GM12878 (cell line): ENCODE measurements at regions of chr9 and their contacts with region 1.

Region 1: DNA sequence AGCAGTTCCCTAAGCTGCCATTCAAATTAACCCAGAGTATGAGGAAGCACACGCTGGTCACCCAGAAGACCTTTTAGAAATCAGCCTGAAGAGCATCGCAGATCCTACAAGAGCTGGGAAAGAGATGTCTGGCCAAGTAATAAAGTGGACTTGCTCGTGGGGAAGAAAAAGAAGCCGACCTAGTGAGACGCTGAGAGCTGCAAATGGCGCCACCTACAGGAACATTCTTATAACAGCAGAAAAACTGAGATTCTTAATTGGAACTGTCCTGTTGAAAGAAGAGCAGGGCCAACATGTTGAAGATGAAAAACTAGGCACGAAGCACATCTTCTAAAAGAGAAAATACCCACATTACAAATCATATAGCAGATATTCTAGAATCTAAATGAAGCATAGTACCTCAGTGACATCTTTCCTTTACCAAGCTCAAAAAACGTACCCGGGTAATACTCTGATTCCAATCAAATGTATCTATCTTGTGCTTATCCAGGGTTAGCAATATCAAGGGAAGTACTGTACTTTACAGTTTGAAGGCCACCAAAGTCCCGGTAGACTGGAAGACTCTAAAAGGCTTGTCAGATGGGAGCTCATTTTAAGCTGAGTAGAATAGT is 3.9 kb upstream of the GNAQ start:
- DNase-seq: peak; percentile 7
- ATAC-seq: peak; percentile 51
- H3K4me3 ChIP-seq: no peak overlapping the region
- H3K27ac ChIP-seq: no peak overlapping the region
- H3K4me1 ChIP-seq: no peaks in the 10 kb centered on the region
- H3K27me3 ChIP-seq: peaks cover 4 to 15% of the 10 kb centered on the region in 2 experiments; a peak in 3 of 4 replicates
- CTCF ChIP-seq: peak; percentile 64 to 72 (median 71)
- EP300 ChIP-seq: no peak
- POLR2A ChIP-seq: no peak
- RAD21 ChIP-seq: peak; percentile 84

Region 2: GRCh38 chr9:77841739-77842386 is 193.6 kb before region 1 on chr9:
- CTCF ChIA-PET with region 1: interaction called, 36 read pairs
- POLR2A ChIA-PET with region 1: no interaction called
- RAD21 ChIA-PET with region 1: interaction called, 21 read pairs
- SMC1A ChIA-PET with region 1: interaction called, 30 read pairs
- in situ Hi-C with region 1: no loop called
- intact Hi-C with region 1: no loop called
- DNase-seq: peak; percentile 16
- ATAC-seq: peak; percentile 95
- H3K4me3 ChIP-seq: no peak overlapping the region
- H3K27ac ChIP-seq: no peak overlapping the region
- H3K4me1 ChIP-seq: peaks cover 8% of the 10 kb centered on the region; the same call in 1 of the 2 replicates
- H3K27me3 ChIP-seq: no peaks in the 10 kb centered on the region
- CTCF ChIP-seq: peak; percentile 1 to 16 (median 8); a peak in 2 of 6 replicates
- EP300 ChIP-seq: no peak; a peak in 1 of 4 replicates
- POLR2A ChIP-seq: no peak
- RAD21 ChIP-seq: peak; percentile 48

Region 3: DNA sequence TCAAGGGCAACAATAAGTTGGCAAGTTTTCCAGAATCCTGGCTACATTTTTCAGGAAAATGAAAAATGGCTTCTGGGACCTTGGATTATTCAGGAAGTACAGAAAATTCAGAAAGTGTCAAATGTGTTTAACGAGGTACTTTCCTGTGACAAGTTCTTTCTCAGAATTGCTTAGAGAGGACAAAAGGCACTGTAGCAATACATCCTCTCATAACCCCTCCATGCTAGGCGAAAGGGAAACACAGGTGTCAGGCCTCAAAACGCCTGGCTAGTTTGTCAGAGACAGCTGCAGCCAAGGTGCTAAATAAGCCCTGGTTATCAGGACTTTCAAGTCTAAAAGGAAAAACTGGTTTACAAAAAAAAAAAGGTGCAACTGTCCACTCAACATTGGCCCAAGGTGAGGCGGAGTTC is 119.1 kb before region 1 on chr9:
- CTCF ChIA-PET with region 1: interaction called, 15 read pairs
- POLR2A ChIA-PET with region 1: no interaction called
- RAD21 ChIA-PET with region 1: interaction called, 3 read pairs
- SMC1A ChIA-PET with region 1: interaction called, 5 read pairs
- in situ Hi-C with region 1: no loop called
- intact Hi-C with region 1: no loop called
- DNase-seq: peak; percentile 24
- ATAC-seq: peak; percentile 89
- H3K4me3 ChIP-seq: no peak overlapping the region
- H3K27ac ChIP-seq: no peak overlapping the region; the same call in 1 of the 2 replicates
- H3K4me1 ChIP-seq: peaks cover 7% of the 10 kb centered on the region
- H3K27me3 ChIP-seq: no peaks in the 10 kb centered on the region
- CTCF ChIP-seq: no peak
- EP300 ChIP-seq: peak; percentile 72 to 86; a peak in 3 of 4 replicates
- POLR2A ChIP-seq: no peak
- RAD21 ChIP-seq: no peak

Region 4: DNA sequence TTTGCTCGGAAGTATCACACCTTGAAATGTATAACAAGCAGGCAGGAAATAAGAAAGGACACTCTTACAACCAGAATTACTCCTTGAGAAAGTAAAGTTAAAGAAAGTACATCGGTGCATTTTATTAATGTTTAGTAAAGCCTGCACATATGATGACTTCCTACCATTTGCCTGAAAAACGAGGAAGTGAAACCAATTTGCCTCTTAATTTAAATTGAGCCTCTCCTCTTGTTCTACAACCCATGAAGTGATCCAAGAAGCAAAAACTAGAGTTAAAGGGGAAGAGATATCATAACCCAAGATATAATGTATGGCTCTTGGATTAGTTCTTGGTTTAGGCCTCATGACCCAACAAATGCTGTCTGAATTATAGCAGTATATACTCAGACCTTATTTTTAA is 99.5 kb before region 1 on chr9:
- CTCF ChIA-PET with region 1: no interaction called
- POLR2A ChIA-PET with region 1: no interaction called
- RAD21 ChIA-PET with region 1: no interaction called
- SMC1A ChIA-PET with region 1: no interaction called
- in situ Hi-C with region 1: no loop called
- intact Hi-C with region 1: no loop called
- DNase-seq: no peak
- ATAC-seq: peak; percentile 77
- H3K4me3 ChIP-seq: no peak overlapping the region
- H3K27ac ChIP-seq: no peak overlapping the region
- H3K4me1 ChIP-seq: no peaks in the 10 kb centered on the region
- H3K27me3 ChIP-seq: no peaks in the 10 kb centered on the region; a peak in 1 of 4 replicates
- CTCF ChIP-seq: no peak
- EP300 ChIP-seq: no peak
- POLR2A ChIP-seq: no peak
- RAD21 ChIP-seq: no peak

Region 5: DNA sequence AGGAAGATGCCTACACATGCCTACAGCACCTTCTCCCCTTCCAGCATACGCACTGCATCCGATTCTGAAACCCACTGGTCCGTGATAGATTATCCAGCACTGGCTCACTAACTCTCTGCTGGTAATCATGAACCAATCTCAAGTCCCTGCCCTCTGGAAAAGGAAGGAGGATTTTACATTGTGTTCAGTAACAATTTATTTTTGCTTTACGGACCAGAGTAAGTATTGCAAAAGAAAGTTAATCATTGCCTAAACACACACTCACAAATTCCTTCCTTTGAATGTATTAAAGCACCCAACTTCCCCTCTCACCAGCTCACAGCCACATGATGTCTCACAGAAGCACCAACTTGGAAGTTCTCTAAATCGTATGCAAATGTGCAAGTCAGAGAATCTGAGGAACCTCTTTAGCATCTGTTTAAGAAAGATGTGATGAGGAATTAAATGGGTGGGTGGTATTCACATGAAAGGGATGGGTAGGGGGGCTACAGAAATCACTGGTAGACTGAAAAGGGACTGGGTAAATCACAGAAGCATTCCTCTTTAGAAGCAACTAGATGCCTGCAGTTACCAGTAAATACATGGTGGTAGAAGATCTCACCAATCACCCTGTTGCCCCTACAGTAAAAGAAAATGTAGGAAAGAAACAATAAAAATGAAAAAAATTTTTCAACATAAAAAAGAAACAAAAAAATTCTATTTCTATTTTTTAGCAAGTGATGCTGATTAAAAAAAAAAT is 12.3 kb before region 1 on chr9:
- CTCF ChIA-PET with region 1: interaction called, 16 read pairs
- POLR2A ChIA-PET with region 1: interaction called, 4 read pairs
- RAD21 ChIA-PET with region 1: interaction called, 8 read pairs
- SMC1A ChIA-PET with region 1: interaction called, 8 read pairs
- in situ Hi-C with region 1: no loop called
- intact Hi-C with region 1: no loop called
- DNase-seq: no peak
- ATAC-seq: peak; percentile 54
- H3K4me3 ChIP-seq: no peak overlapping the region
- H3K27ac ChIP-seq: no peak overlapping the region
- H3K4me1 ChIP-seq: no peaks in the 10 kb centered on the region
- H3K27me3 ChIP-seq: no peaks in the 10 kb centered on the region; a peak in 2 of 4 replicates
- CTCF ChIP-seq: no peak
- EP300 ChIP-seq: 0 out of 4 replicates have a peak, but pooled peaks of 1 of the 2 experiments have one; percentile 11
- POLR2A ChIP-seq: no peak
- RAD21 ChIP-seq: no peak

Region 6: DNA sequence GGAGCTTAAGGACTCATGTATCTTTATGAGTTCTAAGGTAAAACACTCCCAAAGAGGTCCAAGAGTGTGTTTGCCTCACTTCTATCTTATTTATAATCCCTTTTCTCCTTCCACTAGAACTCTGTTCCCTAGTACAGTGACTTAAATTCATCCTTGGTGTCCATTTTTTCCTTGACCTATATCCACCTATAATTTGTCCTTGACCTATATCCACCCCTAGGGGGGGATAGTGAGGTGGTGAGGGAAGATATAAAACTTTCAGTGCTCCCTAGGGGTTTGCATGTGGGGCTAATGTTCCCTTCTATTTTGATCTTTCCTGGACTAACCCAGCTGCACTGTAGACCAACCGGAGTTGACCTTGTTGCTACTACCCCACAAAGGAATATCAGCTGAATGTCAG is 79.6 kb after region 1 on chr9:
- CTCF ChIA-PET with region 1: interaction called, 59 read pairs
- POLR2A ChIA-PET with region 1: no interaction called
- RAD21 ChIA-PET with region 1: interaction called, 14 read pairs
- SMC1A ChIA-PET with region 1: interaction called, 27 read pairs
- in situ Hi-C with region 1: no loop called
- intact Hi-C with region 1: no loop called
- DNase-seq: no peak
- ATAC-seq: peak; percentile 39; the same call in 2 of the 3 replicates
- H3K4me3 ChIP-seq: no peak overlapping the region
- H3K27ac ChIP-seq: no peak overlapping the region
- H3K4me1 ChIP-seq: peaks cover 7% of the 10 kb centered on the region; the same call in 1 of the 2 replicates
- H3K27me3 ChIP-seq: no peaks in the 10 kb centered on the region
- CTCF ChIP-seq: peak; percentile 19 to 55 (median 43); a peak in 3 of 6 replicates
- EP300 ChIP-seq: no peak
- POLR2A ChIP-seq: no peak
- RAD21 ChIP-seq: peak; percentile 52

Region 7: DNA sequence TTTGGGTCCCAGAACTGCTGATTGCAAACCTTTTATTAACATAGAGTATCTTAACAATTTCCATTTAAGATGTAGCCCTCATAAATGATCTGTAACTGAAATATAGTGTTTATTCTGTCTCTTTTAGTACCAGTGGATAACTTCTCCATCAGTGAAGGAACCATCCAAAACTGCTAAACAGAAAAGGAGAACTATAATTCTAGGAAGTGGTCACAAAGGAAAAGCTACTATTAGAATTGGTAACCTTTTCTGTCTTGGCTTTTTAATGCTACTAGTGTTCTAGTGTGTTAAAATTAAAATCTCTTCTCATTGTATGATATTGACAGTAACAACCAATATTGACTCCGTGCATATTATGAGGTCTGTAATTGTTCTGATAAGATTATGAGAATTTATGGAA is 213.1 kb after region 1 on chr9:
- CTCF ChIA-PET with region 1: no interaction called
- POLR2A ChIA-PET with region 1: no interaction called
- RAD21 ChIA-PET with region 1: no interaction called
- SMC1A ChIA-PET with region 1: no interaction called
- in situ Hi-C with region 1: no loop called
- intact Hi-C with region 1: no loop called
- DNase-seq: no peak
- ATAC-seq: no peak
- H3K4me3 ChIP-seq: no peak overlapping the region
- H3K27ac ChIP-seq: no peak overlapping the region
- H3K4me1 ChIP-seq: no peaks in the 10 kb centered on the region
- H3K27me3 ChIP-seq: no peaks in the 10 kb centered on the region
- CTCF ChIP-seq: no peak
- EP300 ChIP-seq: no peak
- POLR2A ChIP-seq: no peak
- RAD21 ChIP-seq: no peak

Region 8: GRCh38 chr9:78304357-78304756 is 268.9 kb after region 1 on chr9:
- CTCF ChIA-PET with region 1: no interaction called
- POLR2A ChIA-PET with region 1: no interaction called
- RAD21 ChIA-PET with region 1: no interaction called
- SMC1A ChIA-PET with region 1: no interaction called
- in situ Hi-C with region 1: no loop called
- intact Hi-C with region 1: no loop called
- DNase-seq: no peak
- ATAC-seq: no peak
- H3K4me3 ChIP-seq: no peak overlapping the region
- H3K27ac ChIP-seq: no peak overlapping the region
- H3K4me1 ChIP-seq: no peaks in the 10 kb centered on the region
- H3K27me3 ChIP-seq: no peaks in the 10 kb centered on the region
- CTCF ChIP-seq: no peak
- EP300 ChIP-seq: no peak
- POLR2A ChIP-seq: no peak
- RAD21 ChIP-seq: no peak